ENCODE measurements at regions of chr10 and their contacts with region 1.

Region 1: DNA sequence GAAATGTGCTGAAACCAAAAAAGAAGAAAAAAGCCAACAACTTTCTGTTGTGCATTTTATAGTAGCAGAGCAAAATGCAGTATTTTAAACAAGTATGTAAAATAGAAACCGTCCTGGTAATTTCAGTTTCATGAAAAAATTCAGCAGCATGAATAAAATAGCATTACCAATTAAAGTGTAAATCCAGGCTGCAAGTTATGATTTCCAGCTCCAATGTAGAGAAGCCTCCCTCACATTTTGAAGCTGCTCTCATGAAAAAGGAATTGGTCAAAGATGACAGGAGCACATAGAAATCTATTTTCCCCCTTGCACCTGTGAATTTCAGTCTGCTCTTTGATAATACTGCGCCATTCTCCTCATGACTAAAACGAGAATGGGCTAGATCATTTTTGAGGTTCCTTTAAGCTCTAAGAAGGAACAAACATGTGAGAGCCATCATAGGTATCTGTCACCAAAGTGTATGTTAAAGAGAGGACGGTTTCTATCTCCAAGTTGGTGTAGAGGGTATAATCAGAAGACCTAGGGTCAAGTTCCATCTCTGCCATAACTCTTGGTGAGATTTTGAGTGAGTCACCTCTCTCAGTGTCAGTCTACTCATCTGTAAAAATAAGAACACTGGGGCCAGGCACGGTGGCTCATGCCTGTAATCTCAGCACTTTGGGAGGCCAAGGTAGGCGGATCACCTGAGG is 107.5 kb downstream of the MTPAP start:
- DNase-seq: no peak
- ATAC-seq: no peak
- H3K4me3 ChIP-seq: no peak overlapping the region
- H3K27ac ChIP-seq: no peak overlapping the region
- H3K4me1 ChIP-seq: no peaks in the 10 kb centered on the region
- H3K27me3 ChIP-seq: no peaks in the 10 kb centered on the region
- CTCF ChIP-seq: no peak

Region 2: DNA sequence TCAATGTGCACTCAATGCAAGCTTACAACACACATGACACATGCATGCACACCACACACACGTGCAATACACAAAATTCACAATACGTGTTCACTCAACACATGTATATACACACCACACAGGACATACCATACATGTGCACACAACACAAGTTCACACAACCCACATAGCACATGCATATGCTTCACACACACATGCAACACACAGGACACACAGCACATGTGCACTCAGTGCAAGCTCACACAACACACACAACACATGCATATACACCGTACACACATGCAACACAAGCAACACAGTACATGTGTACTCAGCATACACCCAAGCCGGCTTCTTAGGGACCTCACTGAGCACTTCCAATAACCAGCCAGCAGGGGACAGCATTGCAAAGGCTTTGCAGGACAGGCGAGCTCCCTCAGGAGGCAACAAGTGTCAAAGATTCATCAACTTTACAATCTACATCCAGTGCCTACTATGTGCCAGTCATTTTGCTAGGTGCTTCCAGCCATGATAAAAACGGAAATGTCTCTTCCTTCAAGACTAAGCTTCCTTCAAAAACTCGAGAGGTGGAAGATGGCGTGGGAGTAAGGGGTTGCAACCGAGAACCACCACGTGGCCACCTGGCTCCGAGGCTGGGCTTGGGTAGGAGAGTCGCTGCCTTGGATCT is 243.3 kb before region 1 on chr10:
- CTCF ChIA-PET with region 1: interaction called, 15 read pairs
- POLR2A ChIA-PET with region 1: no interaction called
- intact Hi-C with region 1: loop called (anchors 1 kb)
- DNase-seq: peak; percentile 83
- ATAC-seq: peak; percentile 77
- H3K4me3 ChIP-seq: no peak overlapping the region
- H3K27ac ChIP-seq: no peak overlapping the region
- H3K4me1 ChIP-seq: peaks cover 7% of the 10 kb centered on the region
- H3K27me3 ChIP-seq: no peaks in the 10 kb centered on the region
- CTCF ChIP-seq: peak; percentile 97

Measured in PC-3 (cell line).